ENCODE measurements at regions of chr3 and their contacts with region 1.

Region 1: DNA sequence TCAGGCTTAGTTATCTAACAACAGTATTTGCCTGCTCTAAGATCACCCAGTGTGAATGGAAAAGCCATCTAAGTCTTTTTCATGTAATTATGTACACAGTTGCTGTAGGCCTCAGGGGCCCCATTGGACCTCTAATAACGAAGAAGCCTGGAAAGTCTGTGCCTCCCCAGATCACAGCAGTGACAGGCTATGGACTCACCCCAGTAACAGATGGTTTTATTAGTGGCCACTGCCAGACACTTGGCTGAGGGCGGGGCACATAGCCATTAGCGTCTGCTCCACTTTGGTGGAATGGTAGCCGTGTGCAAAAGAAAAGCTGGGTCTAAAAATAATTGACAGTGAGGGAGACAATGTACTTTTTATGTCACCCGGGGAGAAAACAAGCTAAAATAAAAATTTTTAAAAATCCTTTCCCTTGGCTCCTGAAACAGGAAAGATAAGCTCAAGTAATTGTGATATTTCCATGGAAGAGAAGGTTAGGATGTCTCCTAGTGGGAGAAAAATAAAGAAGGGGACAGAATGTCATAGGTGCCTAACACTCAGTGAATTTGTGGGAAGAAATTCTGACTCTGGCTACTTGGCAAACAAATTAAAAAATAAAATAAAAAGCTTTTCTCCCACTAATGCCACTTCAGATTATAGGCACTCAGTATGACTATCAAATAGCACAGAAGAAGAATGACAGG is 44.3 kb upstream of the ZNF385D start:
- DNase-seq: peak; percentile 70 to 90
- ATAC-seq: peak; percentile 95 to 99 (median 98)
- H3K4me3 ChIP-seq: no peak overlapping the region
- H3K27ac ChIP-seq: peak overlapping the region in 9 of 10 donors; percentile 37 to 85 (median 78)
- H3K4me1 ChIP-seq: peaks cover 0 to 63% (median 34%) of the 10 kb centered on the region in 9 donors
- H3K27me3 ChIP-seq: no peaks in the 10 kb centered on the region
- CTCF ChIP-seq: peak in 4 of 9 donors; percentile 16 to 42 (median 30)

Region 2: DNA sequence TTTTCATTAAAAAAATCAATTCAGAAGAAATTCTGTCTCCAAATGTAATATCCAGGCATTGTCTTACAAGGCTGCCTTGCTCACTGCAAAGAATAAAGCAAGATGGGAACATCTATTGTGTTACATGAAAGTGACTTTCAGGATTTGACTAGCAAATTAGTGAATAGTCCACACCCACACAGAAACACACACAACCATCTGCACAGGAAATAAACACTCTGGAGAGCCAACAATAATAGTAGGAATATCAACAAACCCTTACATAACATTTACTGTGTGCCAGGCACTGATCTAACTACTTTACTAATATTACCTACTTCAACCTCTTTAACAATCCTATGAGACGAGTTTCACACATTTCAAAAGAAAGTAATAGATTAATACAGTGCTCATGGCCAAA is 15.4 kb before region 1 on chr3:
- intact Hi-C with region 1: loop called in 1 of 10 experiments (anchors 2 kb)
- DNase-seq: peak in 1 of 2 donors; percentile 9
- ATAC-seq: peak; percentile 62 to 91 (median 88)
- H3K4me3 ChIP-seq: no peak overlapping the region
- H3K27ac ChIP-seq: peak overlapping the region in 6 of 10 donors; percentile 14 to 70 (median 42)
- H3K4me1 ChIP-seq: peaks cover 3 to 58% (median 19%) of the 10 kb centered on the region in 9 donors
- H3K27me3 ChIP-seq: no peaks in the 10 kb centered on the region
- CTCF ChIP-seq: peak in 1 of 9 donors; percentile 11

Region 3: DNA sequence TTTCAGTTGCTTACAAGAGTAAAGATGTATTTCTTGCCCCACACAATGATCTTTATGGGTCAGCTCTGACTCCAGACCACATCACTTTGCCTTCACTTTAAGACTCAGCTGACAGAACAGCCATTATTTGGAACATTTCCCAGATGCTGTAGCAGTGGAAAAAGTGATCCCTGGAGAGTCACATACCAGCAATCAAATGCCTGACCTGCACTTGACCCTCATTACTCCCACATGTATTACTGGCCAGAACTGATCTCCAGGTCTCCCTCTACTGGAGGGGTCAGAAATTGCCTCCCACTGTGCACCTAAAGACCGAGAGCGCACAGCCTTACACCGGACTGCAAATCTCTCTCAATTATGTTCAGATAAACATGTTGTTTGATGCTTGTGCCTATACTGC is 44.3 kb after region 1 on chr3:
- intact Hi-C with region 1: loop called in 2 of 10 experiments (anchors 5 kb)
- DNase-seq: peak in 1 of 2 donors; percentile 81
- ATAC-seq: peak; percentile 93 to 97 (median 95)
- H3K4me3 ChIP-seq: no peak overlapping the region
- H3K27ac ChIP-seq: peak overlapping the region in 8 of 10 donors; percentile 1 to 79 (median 54)
- H3K4me1 ChIP-seq: peaks cover 0 to 16% (median 6%) of the 10 kb centered on the region in 9 donors
- H3K27me3 ChIP-seq: no peaks in the 10 kb centered on the region
- CTCF ChIP-seq: peak; percentile 44 to 75 (median 60)

Measured in heart right ventricle (tissue), 16 donors.